ENCODE measurements at regions of chr7 and their contacts with region 1.

Region 1: GRCh38 chr7:28726555-28726954 is 231.6 kb downstream of the TRIL start:
- DNase-seq: no peak
- CTCF ChIP-seq: no peak

Region 2: GRCh38 chr7:28714459-28715120 is 12.0 kb before region 1 on chr7:
- CTCF ChIA-PET with region 1: interaction called, 15 read pairs
- POLR2A ChIA-PET with region 1: no interaction called
- DNase-seq: no peak
- CTCF ChIP-seq: no peak